Motor neuron (in vitro differentiated cells): ENCODE measurements at regions of chr2 and their contacts with region 1.

Region 1: DNA sequence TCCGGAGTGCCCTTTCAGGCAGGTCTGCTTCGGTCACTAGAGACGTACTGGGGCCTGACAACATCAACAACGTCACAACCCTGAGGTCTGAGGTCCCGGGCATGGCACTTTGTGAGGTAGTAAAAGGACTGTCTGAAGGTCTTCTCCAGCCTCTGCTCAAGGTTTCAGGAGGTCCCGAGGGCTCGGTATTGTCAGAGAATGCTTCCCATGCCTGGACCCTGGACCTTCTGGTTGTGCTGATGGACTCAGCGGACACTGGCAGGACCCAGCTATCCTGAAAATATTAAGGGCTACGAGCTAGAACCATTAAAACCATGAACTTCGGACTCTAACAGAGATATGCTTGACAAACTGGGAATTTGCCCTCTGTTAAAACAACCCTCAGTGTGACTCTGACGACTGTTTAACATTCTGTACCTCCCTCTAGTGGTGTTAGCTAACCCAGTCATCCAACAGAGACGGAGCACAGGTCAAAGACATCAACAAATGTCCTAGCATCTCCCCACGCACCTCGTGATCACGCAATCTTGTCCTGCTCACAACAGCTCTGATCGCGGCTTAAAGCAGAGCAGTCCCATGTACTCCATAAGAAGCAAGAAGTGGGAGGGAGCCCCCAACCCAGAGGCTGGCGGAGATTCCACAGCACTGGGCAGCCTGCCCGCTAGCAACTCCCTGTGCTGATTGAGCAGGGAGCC is 96.5 kb downstream of the CCDC93 start:
- ATAC-seq: peak in 1 of 8 experiments; percentile 37
- H3K4me3 ChIP-seq: no peak overlapping the region
- H3K27ac ChIP-seq: no peak overlapping the region
- H3K4me1 ChIP-seq: no peaks in the 10 kb centered on the region

Region 2: GRCh38 chr2:117820444-117820843 is 96.9 kb before region 1 on chr2:
- in situ Hi-C with region 1: loop called in 1 of 9 experiments (anchors 10 kb)
- ATAC-seq: no peak
- H3K4me3 ChIP-seq: no peak overlapping the region
- H3K27ac ChIP-seq: no peak overlapping the region
- H3K4me1 ChIP-seq: peaks cover 6% of the 10 kb centered on the region in 2 donors

Region 3: DNA sequence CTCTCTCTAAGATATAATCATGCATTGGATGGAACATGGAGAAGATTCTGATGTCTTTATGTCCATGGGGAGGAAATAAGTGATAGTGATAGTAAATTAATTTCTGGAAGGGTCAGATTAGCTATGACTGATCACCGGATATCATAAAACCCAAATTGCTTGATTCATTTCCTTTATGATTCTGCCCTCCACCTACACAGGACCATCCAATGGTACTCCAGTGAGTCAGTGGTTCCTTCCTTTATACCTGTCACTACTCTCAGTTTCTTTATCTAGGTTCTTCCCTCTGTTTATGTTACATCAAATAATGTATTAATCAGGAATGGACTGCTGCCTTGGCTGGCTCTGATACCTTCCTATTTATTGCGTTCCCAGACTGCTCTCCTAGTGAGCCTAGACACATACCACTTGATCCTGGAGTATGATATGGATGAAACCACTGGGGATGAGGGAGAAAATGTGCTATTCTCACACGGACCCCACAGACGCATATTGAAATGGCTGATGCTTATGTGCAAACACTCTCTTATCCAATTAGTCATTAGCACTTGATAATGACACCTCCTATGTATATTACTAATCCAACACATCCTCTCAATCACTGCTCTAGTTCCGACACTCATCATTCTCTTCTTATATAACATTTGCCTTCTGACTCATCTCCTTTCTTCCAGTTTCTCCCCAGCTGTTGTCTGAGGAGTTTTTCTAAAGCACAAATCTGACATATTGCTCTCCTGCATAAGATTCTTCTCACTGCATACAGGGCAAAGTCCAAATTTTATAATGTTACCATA is 486.5 kb after region 1 on chr2:
- in situ Hi-C with region 1: no loop called
- ATAC-seq: peak in 1 of 8 experiments; percentile 26
- H3K4me3 ChIP-seq: no peak overlapping the region
- H3K27ac ChIP-seq: no peak overlapping the region
- H3K4me1 ChIP-seq: no peaks in the 10 kb centered on the region